GM12878 (cell line): ENCODE measurements at regions of chr10 and their contacts with region 1.

Region 1: GRCh38 chr10:53135213-53135896 is 362.8 kb upstream of the MBL2 start:
- DNase-seq: no peak
- ATAC-seq: peak; percentile 87
- H3K4me3 ChIP-seq: no peak overlapping the region
- H3K27ac ChIP-seq: no peak overlapping the region
- H3K4me1 ChIP-seq: no peaks in the 10 kb centered on the region
- H3K27me3 ChIP-seq: no peaks in the 10 kb centered on the region; a peak in 1 of 4 replicates
- CTCF ChIP-seq: no peak
- EP300 ChIP-seq: no peak
- POLR2A ChIP-seq: no peak
- RAD21 ChIP-seq: no peak

Region 2: GRCh38 chr10:53003094-53003493 is 132.3 kb before region 1 on chr10:
- CTCF ChIA-PET with region 1: interaction called, 3 read pairs
- POLR2A ChIA-PET with region 1: no interaction called
- RAD21 ChIA-PET with region 1: interaction called, 6 read pairs
- SMC1A ChIA-PET with region 1: interaction called, 14 read pairs
- in situ Hi-C with region 1: no loop called
- intact Hi-C with region 1: no loop called
- DNase-seq: no peak
- ATAC-seq: peak; percentile 71
- H3K4me3 ChIP-seq: no peak overlapping the region
- H3K27ac ChIP-seq: no peak overlapping the region
- H3K4me1 ChIP-seq: no peaks in the 10 kb centered on the region
- H3K27me3 ChIP-seq: no peaks in the 10 kb centered on the region
- CTCF ChIP-seq: no peak
- EP300 ChIP-seq: no peak
- POLR2A ChIP-seq: no peak
- RAD21 ChIP-seq: no peak

Region 3: DNA sequence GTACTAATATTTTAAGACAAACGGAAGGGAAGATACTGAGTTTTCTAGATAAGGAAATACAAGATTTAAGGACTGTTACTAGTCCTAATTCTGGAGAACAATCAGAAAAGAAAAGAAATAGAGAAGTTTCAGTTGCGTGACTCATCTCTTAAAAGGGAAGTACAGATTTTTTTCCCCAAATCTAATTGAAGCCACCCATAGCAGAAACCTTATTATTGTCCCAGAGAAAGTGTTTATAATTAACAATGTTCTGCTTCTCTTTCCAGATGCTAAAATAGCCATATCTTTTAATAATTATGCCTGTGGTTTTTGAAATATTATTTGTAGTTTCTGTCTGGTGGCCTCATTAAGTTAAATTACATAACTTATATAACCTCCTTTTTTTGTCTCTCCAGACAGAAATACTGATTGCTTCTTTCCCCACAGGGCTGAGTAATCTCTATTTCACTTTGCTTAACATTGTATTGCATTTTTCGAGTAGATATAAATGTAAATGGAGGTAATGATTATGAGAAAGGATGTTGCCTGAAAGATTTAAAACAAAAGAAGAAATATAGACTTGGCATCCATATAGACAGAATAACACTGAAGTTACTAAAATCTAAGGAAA is 122.0 kb before region 1 on chr10:
- CTCF ChIA-PET with region 1: no interaction called
- POLR2A ChIA-PET with region 1: no interaction called
- RAD21 ChIA-PET with region 1: no interaction called
- SMC1A ChIA-PET with region 1: interaction called, 6 read pairs
- in situ Hi-C with region 1: no loop called
- intact Hi-C with region 1: loop called (anchors 10 kb)
- DNase-seq: no peak
- ATAC-seq: peak; percentile 84
- H3K4me3 ChIP-seq: no peak overlapping the region
- H3K27ac ChIP-seq: no peak overlapping the region
- H3K4me1 ChIP-seq: peaks cover 14% of the 10 kb centered on the region; the same call in 1 of the 2 replicates
- H3K27me3 ChIP-seq: no peaks in the 10 kb centered on the region
- CTCF ChIP-seq: no peak
- EP300 ChIP-seq: peak; percentile 39 to 56; a peak in 1 of 4 replicates
- POLR2A ChIP-seq: no peak
- RAD21 ChIP-seq: no peak

Region 4: GRCh38 chr10:53108317-53108934 is 26.9 kb before region 1 on chr10:
- CTCF ChIA-PET with region 1: interaction called, 3 read pairs
- POLR2A ChIA-PET with region 1: interaction called, 11 read pairs
- RAD21 ChIA-PET with region 1: no interaction called
- SMC1A ChIA-PET with region 1: interaction called, 9 read pairs
- in situ Hi-C with region 1: no loop called
- intact Hi-C with region 1: no loop called
- DNase-seq: no peak
- ATAC-seq: peak; percentile 69
- H3K4me3 ChIP-seq: no peak overlapping the region
- H3K27ac ChIP-seq: no peak overlapping the region
- H3K4me1 ChIP-seq: no peaks in the 10 kb centered on the region
- H3K27me3 ChIP-seq: no peaks in the 10 kb centered on the region; a peak in 1 of 4 replicates
- CTCF ChIP-seq: no peak
- EP300 ChIP-seq: no peak
- POLR2A ChIP-seq: no peak
- RAD21 ChIP-seq: no peak

Region 5: GRCh38 chr10:53122281-53122680 is 13.1 kb before region 1 on chr10:
- CTCF ChIA-PET with region 1: interaction called, 10 read pairs
- POLR2A ChIA-PET with region 1: no interaction called
- RAD21 ChIA-PET with region 1: interaction called, 6 read pairs
- SMC1A ChIA-PET with region 1: interaction called, 14 read pairs
- in situ Hi-C with region 1: no loop called
- intact Hi-C with region 1: no loop called
- DNase-seq: no peak
- ATAC-seq: peak; percentile 94
- H3K4me3 ChIP-seq: no peak overlapping the region
- H3K27ac ChIP-seq: no peak overlapping the region
- H3K4me1 ChIP-seq: no peaks in the 10 kb centered on the region
- H3K27me3 ChIP-seq: no peaks in the 10 kb centered on the region
- CTCF ChIP-seq: no peak
- EP300 ChIP-seq: no peak
- POLR2A ChIP-seq: no peak
- RAD21 ChIP-seq: no peak